Thyroid gland (tissue), 4 donors: ENCODE measurements at regions of chr9 and their contacts with region 1.

Region 1: DNA sequence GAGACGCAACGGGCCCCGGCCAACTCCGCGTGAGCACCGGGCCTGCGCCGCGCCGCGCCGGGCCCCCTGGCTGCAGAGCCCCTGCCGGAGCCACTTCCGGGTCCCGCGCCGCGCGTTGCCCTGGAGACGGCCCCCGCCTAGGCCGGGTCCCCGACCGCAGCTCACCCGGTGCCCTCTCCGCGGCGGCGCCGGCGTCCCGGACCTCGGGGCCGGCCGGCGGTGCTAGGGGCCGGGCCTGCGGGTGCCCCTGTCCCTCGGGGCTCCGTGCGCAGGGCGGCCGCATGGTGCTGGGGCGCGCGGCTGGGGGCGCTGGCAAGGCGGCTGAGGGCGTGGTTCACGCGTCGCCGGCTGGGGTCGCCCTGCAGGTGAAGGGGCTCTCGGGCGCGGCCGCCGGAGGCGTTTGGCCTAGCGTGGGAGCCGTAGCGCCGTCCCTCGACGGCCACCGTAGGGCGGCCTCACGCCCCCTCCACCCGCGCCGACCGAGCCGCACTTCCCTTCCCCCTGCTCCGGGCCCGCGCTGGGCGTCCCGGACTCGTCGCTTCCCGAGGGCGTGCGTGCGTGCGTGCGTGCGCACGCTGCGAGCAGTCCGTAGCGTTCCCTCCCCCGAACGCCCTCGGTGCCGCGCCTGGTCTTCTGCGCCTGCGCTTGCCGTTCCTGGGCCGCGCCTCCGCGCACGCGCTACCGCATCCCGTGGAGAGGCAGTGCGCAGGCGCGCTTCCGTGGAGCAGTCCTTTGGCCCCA is at the start of gene TMEM250:
- DNase-seq: peak; percentile 94 to 96
- H3K4me3 ChIP-seq: peak within 1 kb of the TSS; percentile 78 to 88 (median 88)
- H3K27ac ChIP-seq: peak within 1 kb of the TSS; percentile 90 to 95 (median 92)
- H3K4me1 ChIP-seq: peaks cover 14 to 30% of the 10 kb centered on the region in 2 donors
- H3K27me3 ChIP-seq: no peaks in the 10 kb centered on the region
- CTCF ChIP-seq: no peak
- POLR2A ChIP-seq: peak in 1 of 2 donors; percentile 91
- total RNA-seq, gene TMEM250: 23.5 to 35.3 (median 25.6) TPM

Region 2: DNA sequence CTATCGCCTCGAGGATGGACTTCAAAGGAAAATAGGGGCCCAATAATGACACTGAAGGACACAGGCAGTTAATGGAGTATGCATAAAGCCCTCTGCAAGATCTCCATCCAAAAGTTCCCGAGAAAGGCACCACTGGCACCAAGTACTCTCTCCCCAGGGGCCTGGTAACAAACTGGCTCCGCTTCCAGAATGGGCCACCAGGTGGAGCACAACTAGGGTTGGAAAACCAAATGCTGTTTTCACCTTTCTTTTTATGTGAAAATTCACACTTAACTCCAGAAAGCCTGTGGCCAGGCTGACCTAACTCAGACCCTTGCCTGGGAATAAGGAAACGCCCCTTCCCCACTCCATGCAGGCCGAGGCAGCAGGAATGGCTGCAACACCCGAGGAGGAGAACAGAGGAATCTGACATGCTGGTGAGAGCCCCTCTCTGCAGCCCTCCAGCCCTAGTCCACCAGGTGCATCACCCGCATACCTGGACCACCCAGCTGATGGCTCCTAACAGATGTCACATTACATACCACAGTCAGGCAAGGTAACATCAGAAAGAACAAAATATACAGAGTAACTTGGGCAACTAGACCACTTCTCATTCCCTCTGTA is 253.9 kb before region 1 on chr9:
- intact Hi-C with region 1: loop called (anchors 5 kb)
- DNase-seq: peak; percentile 62 to 68
- H3K4me3 ChIP-seq: no peak overlapping the region
- H3K27ac ChIP-seq: no peak overlapping the region
- H3K4me1 ChIP-seq: no peaks in the 10 kb centered on the region
- H3K27me3 ChIP-seq: no peaks in the 10 kb centered on the region
- CTCF ChIP-seq: peak; percentile 34 to 87 (median 63)
- POLR2A ChIP-seq: no peak

Region 3: DNA sequence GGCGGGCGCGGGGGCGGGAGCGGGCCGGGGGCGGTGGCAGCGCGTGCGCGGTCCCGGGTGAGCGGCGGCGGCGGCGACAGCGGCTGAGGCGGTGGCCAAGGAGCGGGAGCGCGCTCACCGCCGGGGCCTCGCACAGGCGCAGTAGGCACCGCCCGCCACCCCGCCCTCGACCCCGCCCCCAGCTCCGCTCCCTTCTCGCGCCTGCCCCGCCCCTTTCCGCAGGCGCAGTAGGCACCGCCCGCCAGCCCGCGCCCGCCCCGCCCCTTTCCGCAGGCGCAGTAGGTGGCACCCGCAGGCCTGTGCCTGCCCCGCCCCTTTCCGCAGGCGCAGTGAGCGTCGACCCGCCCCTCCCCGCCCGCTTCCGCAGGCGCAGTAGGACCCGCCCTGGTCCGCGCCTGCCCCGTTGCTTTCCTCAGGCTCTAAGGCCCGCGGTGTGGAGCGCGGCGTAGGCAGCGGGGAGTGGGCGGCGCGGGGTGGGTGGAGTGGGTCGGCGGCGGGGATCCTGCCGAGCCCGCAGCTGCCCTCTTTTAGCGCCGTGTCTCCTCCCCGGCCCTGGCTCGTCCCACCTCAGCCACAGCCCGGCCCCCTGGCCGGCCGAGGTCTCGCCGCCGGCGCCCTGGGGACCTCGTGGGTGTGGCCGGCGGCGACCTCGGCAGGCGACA is 210.9 kb before region 1 on chr9 and contains the start of gene CAMSAP1:
- intact Hi-C with region 1: loop called (anchors 5 kb)
- DNase-seq: peak; percentile 88 to 92
- H3K4me3 ChIP-seq: peak within 1 kb of the TSS; percentile 58 to 82 (median 69)
- H3K27ac ChIP-seq: peak within 1 kb of the TSS in 1 of 3 donors; percentile 67
- H3K4me1 ChIP-seq: peaks cover 18 to 30% of the 10 kb centered on the region in 2 donors
- H3K27me3 ChIP-seq: no peaks in the 10 kb centered on the region
- CTCF ChIP-seq: no peak
- POLR2A ChIP-seq: peak in 1 of 2 donors; percentile 56
- total RNA-seq, gene CAMSAP1: 11.8 to 23.4 (median 19.9) TPM

Region 4: GRCh38 chr9:135961277-135961705 is 157.2 kb before region 1 on chr9 and contains the start of gene UBAC1:
- intact Hi-C with region 1: loop called (anchors 2 kb)
- DNase-seq: peak; percentile 95 to 96
- H3K4me3 ChIP-seq: peak within 1 kb of the TSS; percentile 58 to 82 (median 82)
- H3K27ac ChIP-seq: peak within 1 kb of the TSS; percentile 39 to 77 (median 69)
- H3K4me1 ChIP-seq: peaks cover 8 to 10% of the 10 kb centered on the region in 2 donors
- H3K27me3 ChIP-seq: no peaks in the 10 kb centered on the region
- CTCF ChIP-seq: peak in 4 of 6 experiments; percentile 24 to 65 (median 57)
- POLR2A ChIP-seq: no peak
- total RNA-seq, gene UBAC1: 37.9 to 56.2 (median 44.2) TPM

Region 5: GRCh38 chr9:136363606-136364370 is 245.3 kb after region 1 on chr9 and contains the start of gene DNLZ:
- intact Hi-C with region 1: loop called (anchors 10 kb)
- DNase-seq: peak; percentile 82 to 85
- H3K4me3 ChIP-seq: peak within 1 kb of the TSS; percentile 76 to 86 (median 85)
- H3K27ac ChIP-seq: peak within 1 kb of the TSS; percentile 52 to 76 (median 65)
- H3K4me1 ChIP-seq: peaks cover 8 to 15% of the 10 kb centered on the region in 2 donors
- H3K27me3 ChIP-seq: no peaks in the 10 kb centered on the region
- CTCF ChIP-seq: peak; percentile 49 to 100 (median 99)
- POLR2A ChIP-seq: peak in 1 of 2 donors; percentile 62
- total RNA-seq, gene DNLZ: 16.2 to 58.4 (median 23.1) TPM

Region 6: DNA sequence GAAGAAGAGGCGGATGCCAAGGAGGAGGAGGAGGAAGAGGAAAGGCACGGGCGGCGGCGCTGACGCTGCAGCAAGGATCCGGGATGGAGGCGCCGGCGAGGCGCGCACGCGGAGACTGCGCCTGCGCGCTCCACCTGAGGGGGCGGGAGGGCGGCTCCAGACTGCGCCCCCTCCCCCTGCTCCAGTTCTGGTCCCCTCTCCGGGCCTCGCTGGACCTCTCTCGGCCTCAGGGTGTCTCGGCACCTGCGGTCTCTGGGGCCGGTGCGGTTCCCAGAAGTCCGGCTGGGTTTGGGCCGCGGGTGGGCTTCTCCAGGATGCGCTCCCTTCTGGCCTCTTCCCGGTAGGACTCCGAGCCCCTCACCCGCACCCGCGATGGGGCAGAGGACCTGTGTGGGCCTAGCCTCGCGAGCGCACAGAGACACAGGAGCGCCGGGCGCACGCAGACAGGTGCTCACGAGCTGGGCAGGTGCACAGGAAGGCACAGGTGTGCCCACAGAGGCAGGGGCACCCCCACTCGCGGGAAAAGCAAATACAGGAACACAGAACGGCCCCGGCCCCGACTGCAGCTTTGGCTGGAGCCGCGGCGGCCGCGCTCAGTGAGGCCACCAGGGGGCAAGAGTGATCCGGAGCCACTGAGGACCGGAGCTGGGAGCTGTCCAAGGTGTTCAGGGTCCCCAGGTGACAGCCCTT is 927.8 kb after region 1 on chr9 and contains the start of gene NPDC1:
- intact Hi-C with region 1: no loop called
- DNase-seq: peak; percentile 86
- H3K4me3 ChIP-seq: peak within 1 kb of the TSS; percentile 15 to 37 (median 35)
- H3K27ac ChIP-seq: peak within 1 kb of the TSS in 1 of 3 donors; percentile 56
- H3K4me1 ChIP-seq: peaks cover 6 to 19% of the 10 kb centered on the region in 2 donors
- H3K27me3 ChIP-seq: peaks cover 20% of the 10 kb centered on the region
- CTCF ChIP-seq: peak; percentile 59 to 88 (median 76)
- POLR2A ChIP-seq: no peak
- total RNA-seq, gene NPDC1: 23.3 to 65.9 (median 35.4) TPM